Panc1 (cell line): ENCODE measurements at regions of chr6 and their contacts with region 1.

Region 1: DNA sequence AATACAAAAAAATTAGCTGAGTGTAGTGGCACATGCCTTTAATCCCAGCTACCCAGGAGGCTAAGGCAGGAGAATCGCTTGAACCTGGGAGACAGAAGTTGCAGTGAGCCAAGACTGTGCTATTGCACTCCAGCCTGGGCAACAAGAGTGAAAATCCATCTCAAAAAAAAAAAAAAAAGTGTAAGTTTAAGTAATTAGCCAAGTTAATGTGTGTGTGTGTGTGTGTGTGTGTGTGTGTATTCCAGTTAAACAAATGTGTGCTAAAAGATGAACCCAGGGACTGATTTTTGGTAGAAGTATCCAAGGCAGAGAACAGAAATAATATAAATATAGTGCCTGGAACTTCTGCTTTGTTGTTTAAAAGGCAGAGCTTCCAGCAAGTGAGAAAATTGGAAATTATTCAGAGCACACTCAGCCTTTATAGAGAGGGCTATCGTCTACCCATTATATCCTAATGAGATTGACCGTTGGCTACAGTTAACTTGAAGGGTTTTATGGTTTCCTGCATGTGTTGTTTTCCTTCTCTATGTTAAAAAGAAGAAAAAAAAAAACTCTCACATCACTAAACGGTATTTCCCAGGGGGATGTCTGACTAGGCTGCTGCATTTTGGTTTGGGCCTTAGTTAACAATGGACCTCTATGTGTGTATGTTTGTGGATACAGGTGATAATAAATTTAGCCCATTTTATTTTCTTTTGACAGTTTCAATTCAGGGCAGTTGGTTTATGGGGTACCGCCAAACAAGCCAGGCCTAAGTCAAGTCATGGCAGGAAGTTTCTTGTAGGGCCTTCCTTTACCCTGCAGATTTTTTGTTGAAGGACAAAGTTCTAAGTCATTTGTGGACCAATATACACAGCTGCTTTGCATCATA is 9.8 kb downstream of the SOX4 start:
- DNase-seq: no peak
- ATAC-seq: no peak
- H3K4me3 ChIP-seq: no peak overlapping the region
- H3K27ac ChIP-seq: peak overlapping the region; percentile 67; the same call in 1 of the 2 replicates
- H3K4me1 ChIP-seq: peaks cover 22% of the 10 kb centered on the region
- H3K27me3 ChIP-seq: no peaks in the 10 kb centered on the region
- CTCF ChIP-seq: no peak

Region 2: GRCh38 chr6:20954315-20954714 is 649.0 kb before region 1 on chr6:
- CTCF ChIA-PET with region 1: interaction called, 14 read pairs
- POLR2A ChIA-PET with region 1: no interaction called
- in situ Hi-C with region 1: no loop called
- intact Hi-C with region 1: no loop called
- DNase-seq: no peak
- ATAC-seq: no peak
- H3K4me3 ChIP-seq: no peak overlapping the region
- H3K27ac ChIP-seq: no peak overlapping the region
- H3K4me1 ChIP-seq: no peaks in the 10 kb centered on the region
- H3K27me3 ChIP-seq: no peaks in the 10 kb centered on the region
- CTCF ChIP-seq: no peak

Region 3: DNA sequence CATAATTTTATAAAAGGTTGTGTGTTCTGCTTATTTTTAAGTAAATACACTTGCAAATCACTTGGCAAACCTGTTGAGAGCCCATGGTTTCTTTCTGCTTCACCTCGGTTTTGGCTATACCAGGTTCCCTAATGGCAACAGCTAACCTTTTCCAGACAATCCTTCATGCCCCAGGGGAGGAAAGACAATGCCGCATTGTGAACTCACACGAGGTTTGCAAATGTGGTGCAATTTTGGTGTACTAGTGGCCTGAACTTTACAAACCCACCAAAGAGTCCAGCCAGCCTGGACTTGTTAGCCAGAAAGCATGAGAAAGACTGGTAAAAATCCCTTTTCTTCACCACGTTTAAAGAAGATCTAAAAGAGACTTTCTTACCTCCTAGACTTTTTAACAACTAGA is 94.6 kb before region 1 on chr6:
- CTCF ChIA-PET with region 1: no interaction called
- POLR2A ChIA-PET with region 1: no interaction called
- in situ Hi-C with region 1: no loop called
- intact Hi-C with region 1: no loop called
- DNase-seq: no peak
- ATAC-seq: no peak
- H3K4me3 ChIP-seq: no peak overlapping the region
- H3K27ac ChIP-seq: no peak overlapping the region
- H3K4me1 ChIP-seq: no peaks in the 10 kb centered on the region
- H3K27me3 ChIP-seq: no peaks in the 10 kb centered on the region
- CTCF ChIP-seq: no peak